GM10248 (cell line): ENCODE measurements at regions of chr19 and their contacts with region 1.

Region 1: GRCh38 chr19:50329146-50329925 is at the start of gene KCNC3:
- DNase-seq: peak; percentile 98
- CTCF ChIP-seq: no peak

Region 2: DNA sequence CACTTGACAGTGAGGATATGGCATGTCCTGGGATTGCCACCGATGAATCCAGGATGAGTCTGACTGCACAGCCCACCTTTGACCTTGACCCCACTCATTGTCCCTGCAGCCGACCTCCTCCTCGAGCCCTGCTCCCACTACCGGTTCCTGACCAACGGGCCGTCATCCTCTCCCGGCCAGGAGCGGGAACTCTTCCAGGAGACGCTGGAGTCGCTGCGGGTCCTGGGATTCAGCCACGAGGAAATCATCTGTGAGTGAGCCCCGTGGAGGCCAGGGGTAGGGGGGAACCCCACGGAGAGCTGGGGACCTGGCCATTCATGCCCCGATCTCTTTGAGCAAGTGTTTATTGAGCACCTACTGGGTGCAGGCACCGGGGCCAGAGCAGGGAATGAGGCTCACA is 97.5 kb before region 1 on chr19:
- CTCF ChIA-PET with region 1: no interaction called
- POLR2A ChIA-PET with region 1: no interaction called
- DNase-seq: no peak
- CTCF ChIP-seq: no peak

Region 3: GRCh38 chr19:50315773-50316448 is 13.4 kb before region 1 on chr19:
- CTCF ChIA-PET with region 1: interaction called, 14 read pairs
- POLR2A ChIA-PET with region 1: interaction called, 9 read pairs
- DNase-seq: peak; percentile 83
- CTCF ChIP-seq: no peak

Region 4: DNA sequence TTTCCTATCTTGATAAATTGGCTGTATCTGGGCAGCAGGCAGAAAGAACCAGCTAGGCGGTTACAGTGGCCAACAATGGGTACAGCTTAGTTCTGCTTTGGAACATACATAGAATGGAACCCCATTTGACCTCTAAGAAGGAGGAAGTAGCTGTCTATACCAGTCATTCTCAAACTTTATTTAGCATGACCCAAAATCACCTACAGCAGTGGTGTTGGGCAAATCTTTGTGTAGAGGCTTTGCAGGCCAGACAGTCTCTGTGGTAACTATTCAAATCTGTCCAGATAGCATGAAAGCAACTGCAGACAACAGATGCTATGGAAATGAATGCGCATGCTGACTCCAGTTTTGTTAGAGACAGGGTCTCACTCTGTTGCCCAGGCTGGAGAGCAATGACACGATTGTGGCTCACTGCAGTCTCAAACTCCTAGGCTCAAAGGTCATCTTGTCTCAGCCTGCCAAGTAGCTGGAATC is 11.8 kb after region 1 on chr19:
- CTCF ChIA-PET with region 1: interaction called, 25 read pairs
- POLR2A ChIA-PET with region 1: interaction called, 17 read pairs
- DNase-seq: peak; percentile 58
- CTCF ChIP-seq: no peak